K562 (cell line): ENCODE measurements at regions of chr12 and their contacts with region 1.

Region 1: GRCh38 chr12:15276088-15276698 is 46.1 kb upstream of the PTPRO start:
- DNase-seq: peak; percentile 13 to 40 (median 20)
- ATAC-seq: peak; percentile 59; the same call in 1 of the 3 replicates
- H3K4me3 ChIP-seq: no peak overlapping the region
- H3K27ac ChIP-seq: no peak overlapping the region
- H3K4me1 ChIP-seq: no peaks in the 10 kb centered on the region
- H3K27me3 ChIP-seq: no peaks in the 10 kb centered on the region
- CTCF ChIP-seq: peak; percentile 31 to 59 (median 48); a peak in 4 of 6 replicates
- EP300 ChIP-seq: no peak
- POLR2A ChIP-seq: no peak
- RAD21 ChIP-seq: peak; percentile 42 to 63

Region 2: DNA sequence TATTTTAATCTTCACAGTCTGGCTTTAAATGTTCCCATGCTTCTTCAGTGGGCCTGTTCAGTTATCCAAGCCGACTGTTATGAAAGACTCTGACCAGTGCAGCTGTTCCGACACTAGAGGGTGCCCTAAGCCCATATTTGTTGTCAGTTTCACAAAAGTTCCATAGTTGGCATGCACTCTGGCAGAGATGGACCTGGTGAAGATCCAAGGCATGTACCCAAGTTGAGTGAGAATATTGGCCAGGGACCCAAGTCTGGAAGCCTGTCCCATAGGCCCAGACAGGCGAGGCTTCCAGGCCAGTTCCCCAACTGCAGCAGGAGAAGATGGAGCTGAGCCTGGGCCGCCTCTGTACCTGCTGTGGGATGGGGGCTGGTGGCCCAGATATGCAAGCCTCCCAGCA is 552.4 kb before region 1 on chr12:
- CTCF ChIA-PET with region 1: interaction called, 3 read pairs
- POLR2A ChIA-PET with region 1: no interaction called
- in situ Hi-C with region 1: no loop called
- intact Hi-C with region 1: loop called (anchors 10 kb)
- DNase-seq: peak; percentile 5 to 33 (median 9)
- ATAC-seq: peak; percentile 67; the same call in 2 of the 3 replicates
- H3K4me3 ChIP-seq: no peak overlapping the region
- H3K27ac ChIP-seq: no peak overlapping the region
- H3K4me1 ChIP-seq: no peaks in the 10 kb centered on the region
- H3K27me3 ChIP-seq: no peaks in the 10 kb centered on the region
- CTCF ChIP-seq: peak; percentile 41 to 53 (median 52)
- EP300 ChIP-seq: no peak
- POLR2A ChIP-seq: no peak
- RAD21 ChIP-seq: peak; percentile 24 to 57; a peak in 2 of 4 replicates

Region 3: DNA sequence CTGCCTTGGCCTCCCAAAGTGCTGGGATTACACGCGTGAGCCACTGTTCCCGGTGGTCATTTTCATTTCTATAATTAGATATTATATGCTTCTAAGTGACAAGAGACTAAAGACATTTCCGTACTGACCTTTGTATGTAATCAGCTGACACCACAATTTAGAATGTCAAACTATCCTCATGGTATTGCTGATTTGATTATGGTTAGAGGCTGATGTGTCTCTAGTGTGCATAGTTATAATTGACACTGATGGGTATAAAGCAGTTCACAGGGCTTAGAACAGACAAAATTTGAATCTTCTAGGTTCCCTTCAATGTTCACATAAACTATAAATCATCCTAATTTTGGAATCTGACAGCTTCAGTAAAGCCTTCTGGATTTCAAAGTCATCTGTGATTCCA is 238.8 kb after region 1 on chr12:
- CTCF ChIA-PET with region 1: no interaction called
- POLR2A ChIA-PET with region 1: no interaction called
- in situ Hi-C with region 1: no loop called
- intact Hi-C with region 1: loop called (anchors 2 kb)
- DNase-seq: no peak
- ATAC-seq: no peak
- H3K4me3 ChIP-seq: no peak overlapping the region
- H3K27ac ChIP-seq: no peak overlapping the region
- H3K4me1 ChIP-seq: no peaks in the 10 kb centered on the region
- H3K27me3 ChIP-seq: no peaks in the 10 kb centered on the region
- CTCF ChIP-seq: no peak
- EP300 ChIP-seq: no peak
- POLR2A ChIP-seq: no peak
- RAD21 ChIP-seq: no peak

Region 4: GRCh38 chr12:15584366-15585041 is 308.3 kb after region 1 on chr12:
- CTCF ChIA-PET with region 1: no interaction called
- POLR2A ChIA-PET with region 1: no interaction called
- in situ Hi-C with region 1: no loop called
- intact Hi-C with region 1: loop called (anchors 5 kb)
- DNase-seq: peak in 1 of 4 experiments; percentile 19
- ATAC-seq: no peak
- H3K4me3 ChIP-seq: no peak overlapping the region
- H3K27ac ChIP-seq: no peak overlapping the region
- H3K4me1 ChIP-seq: no peaks in the 10 kb centered on the region
- H3K27me3 ChIP-seq: no peaks in the 10 kb centered on the region
- CTCF ChIP-seq: peak; percentile 4 to 36 (median 17); a peak in 1 of 6 replicates
- EP300 ChIP-seq: no peak
- POLR2A ChIP-seq: no peak
- RAD21 ChIP-seq: peak; percentile 18 to 38; a peak in 3 of 4 replicates

Region 5: GRCh38 chr12:15856097-15856982 is 580.1 kb after region 1 on chr12:
- CTCF ChIA-PET with region 1: no interaction called
- POLR2A ChIA-PET with region 1: no interaction called
- in situ Hi-C with region 1: loop called (anchors 10 kb)
- intact Hi-C with region 1: loop called (anchors 5 kb)
- DNase-seq: peak; percentile 7 to 51 (median 9)
- ATAC-seq: peak; percentile 62
- H3K4me3 ChIP-seq: no peak overlapping the region
- H3K27ac ChIP-seq: no peak overlapping the region
- H3K4me1 ChIP-seq: no peaks in the 10 kb centered on the region
- H3K27me3 ChIP-seq: no peaks in the 10 kb centered on the region
- CTCF ChIP-seq: peak; percentile 39 to 71 (median 44); a peak in 4 of 6 replicates
- EP300 ChIP-seq: no peak
- POLR2A ChIP-seq: no peak
- RAD21 ChIP-seq: peak; percentile 78 to 86